AG04450 (cell line): ENCODE measurements at regions of chr3 and their contacts with region 1.

Region 1: DNA sequence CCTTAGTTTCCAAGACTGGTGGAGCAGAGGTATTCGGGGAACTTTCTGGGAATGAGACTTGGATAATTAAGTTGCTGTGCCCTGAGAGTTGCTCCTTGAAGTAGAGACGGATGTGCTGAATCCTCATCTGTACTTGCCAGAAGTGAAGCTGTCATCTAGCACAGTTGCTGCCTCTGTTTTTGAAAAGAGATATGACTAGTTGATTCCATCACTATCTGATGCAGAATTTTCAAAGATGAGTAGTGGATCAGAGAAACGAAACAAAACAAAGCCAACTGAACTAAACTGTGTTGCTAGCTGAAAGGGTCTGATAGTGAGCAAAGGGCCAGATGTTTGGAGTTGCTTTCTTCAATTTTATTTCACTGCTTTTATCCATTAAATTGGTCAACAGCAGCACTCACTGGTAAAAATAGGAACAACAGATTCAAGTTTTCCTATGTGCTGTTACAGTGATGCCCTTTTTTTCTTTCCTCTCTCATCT is 52.7 kb downstream of the MITF start:
- DNase-seq: no peak
- H3K4me3 ChIP-seq: no peak overlapping the region
- H3K27ac ChIP-seq: no peak overlapping the region
- H3K27me3 ChIP-seq: no peaks in the 10 kb centered on the region
- CTCF ChIP-seq: peak; percentile 65

Region 2: GRCh38 chr3:69532544-69533224 is 259.3 kb before region 1 on chr3:
- CTCF ChIA-PET with region 1: no interaction called
- POLR2A ChIA-PET with region 1: no interaction called
- DNase-seq: no peak
- H3K4me3 ChIP-seq: no peak overlapping the region
- H3K27ac ChIP-seq: peak overlapping the region; percentile 11
- H3K27me3 ChIP-seq: peaks cover 4% of the 10 kb centered on the region
- CTCF ChIP-seq: no peak

Region 3: GRCh38 chr3:69612791-69613190 is 179.2 kb before region 1 on chr3:
- CTCF ChIA-PET with region 1: no interaction called
- POLR2A ChIA-PET with region 1: no interaction called
- DNase-seq: no peak
- H3K4me3 ChIP-seq: no peak overlapping the region
- H3K27ac ChIP-seq: no peak overlapping the region
- H3K27me3 ChIP-seq: no peaks in the 10 kb centered on the region
- CTCF ChIP-seq: no peak

Region 4: GRCh38 chr3:69691860-69692259 is 100.1 kb before region 1 on chr3:
- CTCF ChIA-PET with region 1: interaction called, 78 read pairs
- POLR2A ChIA-PET with region 1: interaction called, 3 read pairs
- DNase-seq: no peak
- H3K4me3 ChIP-seq: no peak overlapping the region
- H3K27ac ChIP-seq: no peak overlapping the region
- H3K27me3 ChIP-seq: no peaks in the 10 kb centered on the region
- CTCF ChIP-seq: no peak

Region 5: DNA sequence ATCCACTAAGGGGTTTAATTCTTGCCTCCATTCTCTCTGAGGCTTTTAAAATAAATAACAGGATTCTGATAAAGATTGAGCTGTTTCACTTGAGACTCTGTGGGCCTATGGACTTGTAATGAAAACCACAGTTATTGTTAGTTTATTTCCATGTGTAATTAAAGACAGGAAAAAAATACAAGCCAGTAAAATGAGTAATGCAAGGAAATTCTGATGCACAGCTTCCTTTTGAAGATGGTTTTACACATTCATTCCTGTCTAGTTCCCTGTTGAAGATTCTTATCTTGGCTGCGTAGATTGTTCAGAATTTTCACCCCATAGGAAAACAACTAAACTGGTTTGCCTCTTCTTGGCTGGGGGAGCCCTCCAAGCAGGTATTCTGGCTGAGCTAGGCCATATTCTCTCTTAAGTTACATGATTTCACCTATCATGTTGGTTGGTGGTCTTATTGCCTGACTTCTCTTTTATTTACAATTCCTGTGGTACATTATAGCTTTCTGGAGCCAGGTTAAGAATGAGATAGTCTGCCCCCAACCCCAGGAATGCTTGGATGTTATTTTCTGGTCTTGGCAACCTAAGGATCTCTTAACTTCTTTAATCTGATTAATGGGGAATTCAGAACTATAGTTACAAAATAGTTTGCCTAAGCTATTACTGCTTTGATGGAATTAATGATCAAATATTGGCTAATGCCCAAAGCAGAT is 14.9 kb after region 1 on chr3:
- CTCF ChIA-PET with region 1: interaction called, 35 read pairs
- POLR2A ChIA-PET with region 1: interaction called, 3 read pairs
- DNase-seq: no peak
- H3K4me3 ChIP-seq: no peak overlapping the region
- H3K27ac ChIP-seq: peak overlapping the region; percentile 86
- H3K27me3 ChIP-seq: no peaks in the 10 kb centered on the region
- CTCF ChIP-seq: no peak

Region 6: GRCh38 chr3:69855436-69856162 is 63.6 kb after region 1 on chr3:
- CTCF ChIA-PET with region 1: interaction called, 34 read pairs
- POLR2A ChIA-PET with region 1: interaction called, 3 read pairs
- DNase-seq: no peak
- H3K4me3 ChIP-seq: no peak overlapping the region
- H3K27ac ChIP-seq: no peak overlapping the region
- H3K27me3 ChIP-seq: no peaks in the 10 kb centered on the region
- CTCF ChIP-seq: peak; percentile 70

Region 7: GRCh38 chr3:69948246-69948862 is 156.4 kb after region 1 on chr3:
- CTCF ChIA-PET with region 1: interaction called, 15 read pairs
- POLR2A ChIA-PET with region 1: no interaction called
- DNase-seq: peak; percentile 38
- H3K4me3 ChIP-seq: no peak overlapping the region
- H3K27ac ChIP-seq: no peak overlapping the region
- H3K27me3 ChIP-seq: no peaks in the 10 kb centered on the region
- CTCF ChIP-seq: peak; percentile 63

Region 8: DNA sequence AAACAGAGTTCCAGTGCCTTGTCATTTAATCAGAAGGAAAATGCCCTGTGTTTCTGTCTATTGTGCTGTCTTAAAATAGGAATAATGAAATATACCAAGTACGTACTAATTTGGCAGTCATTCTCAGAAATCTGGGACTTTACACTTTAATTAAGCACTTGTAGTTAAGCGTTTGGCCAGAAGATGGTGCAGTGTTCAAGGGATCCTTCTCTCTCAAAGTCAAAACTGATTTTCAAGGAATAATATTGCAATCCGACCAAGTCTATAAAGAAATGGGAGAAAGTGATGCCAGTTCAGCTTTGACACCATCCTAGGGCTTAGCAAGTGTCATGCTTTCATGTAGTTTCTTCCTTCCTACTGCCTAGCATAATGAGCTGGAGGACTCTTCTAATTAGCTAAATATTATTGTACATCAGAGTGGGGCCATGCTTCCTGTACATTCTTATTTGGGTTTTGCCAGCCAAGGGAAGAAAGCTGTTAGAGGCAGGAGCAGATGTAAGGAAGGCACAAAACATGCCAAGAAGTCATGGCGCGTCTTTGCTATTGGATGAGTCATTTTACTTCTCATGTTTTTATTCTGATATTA is 272.3 kb after region 1 on chr3:
- CTCF ChIA-PET with region 1: no interaction called
- POLR2A ChIA-PET with region 1: no interaction called
- DNase-seq: peak; percentile 7
- H3K4me3 ChIP-seq: no peak overlapping the region
- H3K27ac ChIP-seq: no peak overlapping the region
- H3K27me3 ChIP-seq: peaks cover 6% of the 10 kb centered on the region
- CTCF ChIP-seq: peak; percentile 72